ENCODE measurements at regions of chr7 and their contacts with region 1.

Region 1: GRCh38 chr7:18638594-18639452 is 143.3 kb downstream of the HDAC9 start:
- DNase-seq: no peak
- H3K4me3 Mint-ChIP-seq: no peak overlapping the region
- H3K27ac Mint-ChIP-seq: peak overlapping the region; percentile 87
- H3K4me1 Mint-ChIP-seq: peaks cover 26% of the 10 kb centered on the region
- H3K27me3 Mint-ChIP-seq: no peaks in the 10 kb centered on the region

Region 2: GRCh38 chr7:18320971-18321567 is 317.8 kb before region 1 on chr7:
- intact Hi-C with region 1: no loop called
- DNase-seq: no peak
- H3K4me3 Mint-ChIP-seq: no peak overlapping the region
- H3K27ac Mint-ChIP-seq: no peak overlapping the region
- H3K4me1 Mint-ChIP-seq: no peaks in the 10 kb centered on the region
- H3K27me3 Mint-ChIP-seq: no peaks in the 10 kb centered on the region

Region 3: DNA sequence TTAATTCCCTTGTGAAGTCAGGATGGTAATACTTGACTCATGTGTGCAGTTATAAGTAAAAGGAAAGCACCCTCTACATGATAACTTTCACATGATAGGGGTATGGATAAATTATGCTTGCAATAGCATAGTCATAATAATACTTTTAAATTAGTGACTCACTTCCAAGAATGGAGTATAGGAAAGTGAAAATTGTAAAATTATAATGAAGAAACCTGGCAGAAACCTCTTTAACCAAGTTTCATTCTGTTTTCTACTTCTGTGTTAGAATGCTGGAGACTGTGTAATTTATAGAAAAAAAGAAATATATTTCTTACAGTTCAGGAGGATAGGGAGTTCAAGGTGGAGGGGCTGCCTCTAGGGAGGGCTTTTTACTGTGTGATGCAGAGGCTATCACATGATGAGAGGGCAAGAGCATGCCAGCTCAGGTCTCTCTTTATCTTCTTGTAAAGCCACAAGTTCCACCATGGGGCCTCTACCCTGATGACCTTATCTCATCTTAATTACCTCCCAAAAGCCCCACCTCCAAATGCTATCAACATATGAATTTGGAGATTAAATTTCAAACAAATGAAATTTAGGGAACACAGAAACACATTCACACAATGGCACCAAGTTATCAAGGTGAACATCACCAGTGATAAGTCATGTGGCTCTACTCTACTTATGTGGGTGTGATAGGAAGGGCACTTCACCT is 100.1 kb before region 1 on chr7:
- intact Hi-C with region 1: loop called (anchors 2 kb)
- DNase-seq: no peak
- H3K4me3 Mint-ChIP-seq: no peak overlapping the region
- H3K27ac Mint-ChIP-seq: peak overlapping the region; percentile 31
- H3K4me1 Mint-ChIP-seq: peaks cover 7% of the 10 kb centered on the region
- H3K27me3 Mint-ChIP-seq: no peaks in the 10 kb centered on the region

Region 4: GRCh38 chr7:18610331-18610948 is 28.4 kb before region 1 on chr7:
- intact Hi-C with region 1: loop called (anchors 1 kb)
- DNase-seq: no peak
- H3K4me3 Mint-ChIP-seq: no peak overlapping the region
- H3K27ac Mint-ChIP-seq: no peak overlapping the region
- H3K4me1 Mint-ChIP-seq: peaks cover 3% of the 10 kb centered on the region
- H3K27me3 Mint-ChIP-seq: no peaks in the 10 kb centered on the region

Region 5: DNA sequence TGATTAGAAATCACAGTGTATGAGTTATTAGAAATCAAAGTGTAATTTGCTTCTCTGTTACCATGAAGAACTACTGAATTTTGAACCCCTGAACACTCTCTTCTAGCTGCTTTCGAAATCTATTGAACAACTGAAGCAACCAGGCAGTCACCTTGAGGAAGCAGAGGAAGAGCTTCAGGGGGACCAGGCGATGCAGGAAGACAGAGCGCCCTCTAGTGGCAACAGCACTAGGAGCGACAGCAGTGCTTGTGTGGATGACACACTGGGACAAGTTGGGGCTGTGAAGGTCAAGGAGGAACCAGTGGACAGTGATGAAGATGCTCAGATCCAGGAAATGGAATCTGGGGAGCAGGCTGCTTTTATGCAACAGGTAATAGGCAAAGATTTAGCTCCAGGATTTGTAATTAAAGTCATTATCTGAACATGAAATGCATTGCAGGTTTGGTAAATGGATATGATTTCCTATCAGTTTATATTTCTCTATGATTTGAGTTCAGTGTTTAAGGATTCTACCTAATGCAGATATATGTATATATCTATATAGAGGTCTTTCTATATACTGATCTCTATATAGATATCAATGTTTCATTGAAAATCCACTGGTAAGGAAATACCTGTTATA is 27.4 kb after region 1 on chr7:
- intact Hi-C with region 1: loop called (anchors 1 kb)
- DNase-seq: peak; percentile 42
- H3K4me3 Mint-ChIP-seq: no peak overlapping the region
- H3K27ac Mint-ChIP-seq: no peak overlapping the region
- H3K4me1 Mint-ChIP-seq: no peaks in the 10 kb centered on the region
- H3K27me3 Mint-ChIP-seq: no peaks in the 10 kb centered on the region

Region 6: GRCh38 chr7:18866359-18867036 is 227.7 kb after region 1 on chr7:
- intact Hi-C with region 1: loop called (anchors 2 kb)
- DNase-seq: no peak
- H3K4me3 Mint-ChIP-seq: no peak overlapping the region
- H3K27ac Mint-ChIP-seq: peak overlapping the region; percentile 66
- H3K4me1 Mint-ChIP-seq: peaks cover 9% of the 10 kb centered on the region
- H3K27me3 Mint-ChIP-seq: no peaks in the 10 kb centered on the region